PC-3 (cell line): ENCODE measurements at regions of chr2 and their contacts with region 1.

Region 1: GRCh38 chr2:197777823-197778407 is 7.2 kb downstream of the BOLL start:
- DNase-seq: peak; percentile 66
- ATAC-seq: no peak
- H3K4me3 ChIP-seq: no peak overlapping the region
- H3K27ac ChIP-seq: no peak overlapping the region
- H3K4me1 ChIP-seq: no peaks in the 10 kb centered on the region
- H3K27me3 ChIP-seq: no peaks in the 10 kb centered on the region
- CTCF ChIP-seq: peak; percentile 89

Region 2: GRCh38 chr2:197324801-197325200 is 453.1 kb before region 1 on chr2:
- CTCF ChIA-PET with region 1: no interaction called
- POLR2A ChIA-PET with region 1: no interaction called
- intact Hi-C with region 1: loop called (anchors 2 kb)
- DNase-seq: no peak
- ATAC-seq: no peak
- H3K4me3 ChIP-seq: no peak overlapping the region
- H3K27ac ChIP-seq: no peak overlapping the region
- H3K4me1 ChIP-seq: no peaks in the 10 kb centered on the region
- H3K27me3 ChIP-seq: peaks cover 7% of the 10 kb centered on the region; the same call in 1 of the 2 replicates
- CTCF ChIP-seq: no peak

Region 3: DNA sequence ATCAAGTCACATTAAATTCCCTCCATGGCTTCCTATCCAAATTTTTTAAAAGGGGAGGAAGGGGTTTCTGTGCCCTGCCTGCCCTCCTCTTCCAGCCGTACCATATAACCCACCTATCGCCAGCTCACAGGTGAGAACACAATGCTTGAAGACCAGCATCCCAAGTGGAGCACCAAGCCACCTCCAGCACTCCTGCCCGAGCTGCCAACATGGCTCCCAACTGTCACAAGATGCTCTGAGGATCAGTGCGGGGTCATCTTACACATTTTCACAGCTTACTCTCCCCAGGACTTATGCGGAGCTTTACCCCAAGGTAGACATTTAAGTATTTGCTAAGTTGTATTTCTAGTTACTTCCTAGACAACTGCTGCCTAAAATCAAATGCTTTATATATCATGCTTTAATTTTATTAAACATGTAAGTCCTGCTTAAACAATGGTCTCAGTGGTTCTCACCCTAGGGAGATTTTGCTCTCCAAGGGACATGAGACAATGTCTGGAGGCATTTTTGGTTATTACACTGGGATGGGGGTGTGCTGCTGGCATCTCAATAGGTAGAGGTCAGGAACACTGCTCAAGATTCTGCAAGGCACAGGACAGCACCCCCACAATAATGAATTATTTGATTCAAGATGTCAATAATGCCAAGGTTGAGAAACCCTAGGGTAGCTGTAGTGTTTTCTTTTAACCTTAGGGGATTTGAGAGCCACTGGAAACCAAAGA is 388.9 kb before region 1 on chr2:
- CTCF ChIA-PET with region 1: no interaction called
- POLR2A ChIA-PET with region 1: no interaction called
- intact Hi-C with region 1: loop called (anchors 5 kb)
- DNase-seq: no peak
- ATAC-seq: no peak
- H3K4me3 ChIP-seq: no peak overlapping the region
- H3K27ac ChIP-seq: no peak overlapping the region
- H3K4me1 ChIP-seq: no peaks in the 10 kb centered on the region
- H3K27me3 ChIP-seq: no peaks in the 10 kb centered on the region
- CTCF ChIP-seq: no peak

Region 4: DNA sequence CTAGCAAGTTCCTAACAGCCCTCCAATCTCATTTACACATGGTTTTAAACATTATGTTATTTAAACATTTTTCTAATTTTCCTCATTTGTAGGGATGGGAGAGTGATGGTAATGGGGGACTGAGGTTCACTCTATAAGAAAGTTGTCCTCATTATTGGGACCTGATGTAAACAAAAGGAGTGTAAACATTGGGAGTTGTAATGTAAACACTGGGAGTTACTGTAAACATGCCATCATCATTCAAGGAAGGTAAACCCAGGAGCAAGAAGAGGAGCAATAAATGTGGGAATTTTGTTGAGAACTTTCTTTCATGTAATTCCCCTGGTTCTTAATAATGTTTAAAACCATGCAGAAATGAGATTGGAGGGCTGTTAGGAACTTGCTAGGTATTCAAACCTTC is 120.4 kb before region 1 on chr2:
- CTCF ChIA-PET with region 1: no interaction called
- POLR2A ChIA-PET with region 1: no interaction called
- intact Hi-C with region 1: no loop called
- DNase-seq: no peak
- ATAC-seq: no peak
- H3K4me3 ChIP-seq: no peak overlapping the region
- H3K27ac ChIP-seq: no peak overlapping the region
- H3K4me1 ChIP-seq: no peaks in the 10 kb centered on the region
- H3K27me3 ChIP-seq: no peaks in the 10 kb centered on the region
- CTCF ChIP-seq: no peak